ENCODE measurements at regions of chr7 and their contacts with region 1.

Region 1: GRCh38 chr7:67625257-67625737 is 628.7 kb downstream of the TYW1 start:
- DNase-seq: peak; percentile 91
- H3K4me3 ChIP-seq: peak overlapping the region; percentile 35
- H3K27ac ChIP-seq: no peak overlapping the region
- H3K4me1 ChIP-seq: peaks cover 7% of the 10 kb centered on the region
- H3K27me3 ChIP-seq: no peaks in the 10 kb centered on the region
- CTCF ChIP-seq: peak; percentile 93

Region 2: GRCh38 chr7:67484244-67484751 is 141.0 kb before region 1 on chr7:
- CTCF ChIA-PET with region 1: interaction called, 6 read pairs
- POLR2A ChIA-PET with region 1: no interaction called
- intact Hi-C with region 1: loop called (anchors 1 kb)
- DNase-seq: peak; percentile 81
- H3K4me3 ChIP-seq: peak overlapping the region; percentile 21
- H3K27ac ChIP-seq: no peak overlapping the region
- H3K4me1 ChIP-seq: peaks cover 7% of the 10 kb centered on the region
- H3K27me3 ChIP-seq: no peaks in the 10 kb centered on the region
- CTCF ChIP-seq: peak; percentile 85

Region 3: DNA sequence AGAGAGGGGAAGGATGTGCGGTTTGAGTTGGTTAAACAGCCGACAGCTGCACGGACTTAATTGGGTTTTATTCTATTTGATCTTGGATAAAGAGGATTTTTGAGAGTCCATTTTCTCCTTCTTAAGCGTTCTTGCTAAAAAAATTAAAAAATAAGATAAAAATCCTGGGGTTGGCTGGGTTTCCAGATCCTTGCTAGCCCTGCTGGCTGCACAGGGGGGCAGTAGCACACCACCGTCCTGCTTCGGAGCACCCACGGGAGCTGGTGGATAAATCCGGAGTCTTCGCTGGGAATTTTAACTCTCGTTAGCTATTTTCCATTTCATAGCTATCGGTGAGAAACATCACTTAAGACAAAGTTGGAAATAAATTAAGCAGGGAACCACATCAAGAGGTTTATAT is 163.4 kb after region 1 on chr7:
- CTCF ChIA-PET with region 1: no interaction called
- POLR2A ChIA-PET with region 1: no interaction called
- intact Hi-C with region 1: loop called (anchors 5 kb)
- DNase-seq: peak; percentile 49
- H3K4me3 ChIP-seq: no peak overlapping the region
- H3K27ac ChIP-seq: no peak overlapping the region
- H3K4me1 ChIP-seq: no peaks in the 10 kb centered on the region
- H3K27me3 ChIP-seq: no peaks in the 10 kb centered on the region
- CTCF ChIP-seq: peak; percentile 73

Region 4: GRCh38 chr7:68176974-68177373 is 551.7 kb after region 1 on chr7:
- CTCF ChIA-PET with region 1: no interaction called
- POLR2A ChIA-PET with region 1: no interaction called
- intact Hi-C with region 1: loop called (anchors 5 kb)
- DNase-seq: peak; percentile 87
- H3K4me3 ChIP-seq: no peak overlapping the region
- H3K27ac ChIP-seq: no peak overlapping the region
- H3K4me1 ChIP-seq: no peaks in the 10 kb centered on the region
- H3K27me3 ChIP-seq: no peaks in the 10 kb centered on the region
- CTCF ChIP-seq: peak; percentile 85

Measured in A673 (cell line).